PC-9 (cell line): ENCODE measurements at regions of chr2 and their contacts with region 1.

Region 1: GRCh38 chr2:112645310-112646101 is at the start of gene SLC20A1:
- DNase-seq: peak; percentile 93 to 98
- H3K4me3 ChIP-seq: peak within 1 kb of the TSS; percentile 99
- H3K27ac ChIP-seq: peak within 1 kb of the TSS; percentile 99
- H3K4me1 ChIP-seq: peaks cover 68% of the 10 kb centered on the region
- H3K27me3 ChIP-seq: no peaks in the 10 kb centered on the region
- CTCF ChIP-seq: peak; percentile 66
- total RNA-seq, gene SLC20A1: 99.9 and 106 TPM in 2 replicates

Region 2: DNA sequence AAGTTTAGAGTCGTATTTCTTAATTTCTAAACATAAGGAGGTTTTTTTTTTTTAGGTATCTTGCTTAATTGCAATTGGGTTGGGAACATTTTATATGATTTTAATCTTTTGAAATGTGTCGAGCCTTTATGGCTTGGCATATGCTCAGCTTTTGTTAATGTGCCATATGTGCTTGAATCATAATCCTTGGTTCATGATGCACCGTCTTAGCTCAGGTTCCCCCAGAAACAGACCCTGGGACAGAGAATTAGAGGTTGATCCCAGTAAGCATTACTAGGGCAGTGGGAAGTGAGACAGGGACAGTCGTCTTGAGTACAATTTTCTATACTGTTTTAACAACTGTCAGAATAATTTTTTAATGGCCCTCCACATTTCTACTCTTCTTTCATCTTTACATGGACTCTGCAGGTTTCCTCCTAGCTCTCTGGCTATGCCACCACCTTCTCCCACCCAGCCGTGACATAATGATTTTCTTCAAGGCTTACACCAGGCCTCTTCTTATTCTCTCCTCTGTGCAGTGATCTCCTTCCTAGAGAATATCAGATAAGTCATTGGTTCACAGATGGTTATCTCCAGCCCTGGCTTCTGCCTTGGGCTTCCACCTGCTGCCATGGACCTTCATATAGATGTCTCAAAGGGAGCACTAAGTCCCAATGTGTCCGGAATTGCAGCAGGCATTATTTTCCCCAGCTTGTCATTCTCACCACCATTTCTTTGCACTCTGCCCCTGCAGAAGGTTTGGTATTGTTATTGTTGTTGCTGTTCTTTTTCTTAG is 51.6 kb before region 1 on chr2:
- CTCF ChIA-PET with region 1: interaction called, 12 read pairs
- POLR2A ChIA-PET with region 1: no interaction called
- intact Hi-C with region 1: no loop called
- DNase-seq: no peak
- H3K4me3 ChIP-seq: no peak overlapping the region
- H3K27ac ChIP-seq: no peak overlapping the region
- H3K4me1 ChIP-seq: peaks cover 12% of the 10 kb centered on the region; the same call in 1 of the 2 replicates
- H3K27me3 ChIP-seq: no peaks in the 10 kb centered on the region
- CTCF ChIP-seq: no peak

Region 3: DNA sequence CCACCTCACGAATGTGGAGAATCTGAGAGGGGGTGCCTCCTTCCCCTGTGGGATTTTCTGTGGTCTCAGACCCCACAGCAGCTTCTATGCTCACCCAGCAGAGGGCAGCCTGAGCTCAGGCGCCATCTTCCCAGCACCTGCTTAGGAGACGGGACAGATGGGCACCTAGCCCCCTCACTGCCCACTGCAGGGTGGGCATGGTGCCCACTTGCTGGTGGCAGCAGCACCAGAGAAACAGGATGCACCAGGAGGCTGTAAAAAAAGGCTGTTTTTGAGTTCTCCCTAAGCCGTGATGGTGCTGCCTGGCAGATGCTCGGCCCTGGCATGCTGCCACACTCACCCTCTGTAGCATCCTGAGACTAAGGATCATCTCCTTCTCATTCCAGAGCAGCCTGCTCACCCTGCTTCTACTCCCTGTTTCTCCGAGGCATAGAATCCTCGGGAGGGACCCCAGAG is 18.9 kb before region 1 on chr2:
- CTCF ChIA-PET with region 1: interaction called, 9 read pairs
- POLR2A ChIA-PET with region 1: interaction called, 57 read pairs
- intact Hi-C with region 1: loop called (anchors 1 kb)
- DNase-seq: peak in 1 of 2 experiments; percentile 65
- H3K4me3 ChIP-seq: peak overlapping the region; percentile 45; the same call in 1 of the 2 replicates
- H3K27ac ChIP-seq: peak overlapping the region; percentile 95
- H3K4me1 ChIP-seq: peaks cover 96% of the 10 kb centered on the region
- H3K27me3 ChIP-seq: no peaks in the 10 kb centered on the region
- CTCF ChIP-seq: peak; percentile 85

Region 4: GRCh38 chr2:112692496-112692911 is 47.0 kb after region 1 on chr2:
- CTCF ChIA-PET with region 1: no interaction called
- POLR2A ChIA-PET with region 1: no interaction called
- intact Hi-C with region 1: loop called (anchors 1 kb)
- DNase-seq: peak; percentile 88 to 96
- H3K4me3 ChIP-seq: peak overlapping the region; percentile 12; the same call in 1 of the 2 replicates
- H3K27ac ChIP-seq: peak overlapping the region; percentile 77
- H3K4me1 ChIP-seq: peaks cover 46% of the 10 kb centered on the region
- H3K27me3 ChIP-seq: no peaks in the 10 kb centered on the region
- CTCF ChIP-seq: no peak

Region 5: DNA sequence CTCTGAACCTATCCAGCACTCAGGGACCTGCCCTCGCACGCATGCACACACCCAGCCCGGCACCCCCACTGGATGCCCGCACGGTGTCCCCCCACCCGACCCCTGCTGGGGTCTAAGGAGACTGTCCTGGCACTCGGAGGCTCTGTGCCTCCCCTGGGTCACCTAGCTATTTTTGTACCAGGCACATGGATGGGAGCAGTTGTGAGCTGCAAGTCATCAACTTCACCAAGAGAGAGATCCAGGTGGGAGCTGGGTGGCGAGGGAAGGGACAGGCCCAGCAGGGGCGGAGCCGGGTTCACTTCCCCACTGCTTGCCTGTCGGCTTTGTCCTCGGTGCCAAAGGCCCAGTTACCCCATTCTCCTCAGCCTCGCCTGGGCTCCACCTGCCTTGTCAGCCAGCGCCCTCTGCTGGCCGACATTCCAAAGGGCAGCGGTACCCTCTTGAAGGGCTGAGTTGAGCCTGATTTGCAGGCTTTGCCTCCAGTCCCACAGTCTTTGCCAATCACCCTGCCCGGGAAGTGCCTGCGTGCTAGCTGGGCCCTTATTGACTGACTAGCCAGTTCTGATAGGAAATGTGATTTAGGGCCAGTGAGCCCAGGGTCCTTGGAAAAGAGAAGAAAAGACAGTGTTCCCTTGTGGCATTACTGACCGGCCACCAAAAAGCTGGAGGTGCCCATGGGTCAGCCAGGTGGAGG is 81.1 kb after region 1 on chr2:
- CTCF ChIA-PET with region 1: no interaction called
- POLR2A ChIA-PET with region 1: interaction called, 6 read pairs
- intact Hi-C with region 1: loop called (anchors 1 kb)
- DNase-seq: peak; percentile 87 to 95
- H3K4me3 ChIP-seq: no peak overlapping the region
- H3K27ac ChIP-seq: peak overlapping the region; percentile 77
- H3K4me1 ChIP-seq: peaks cover 26% of the 10 kb centered on the region
- H3K27me3 ChIP-seq: no peaks in the 10 kb centered on the region
- CTCF ChIP-seq: peak; percentile 96